H1 (cell line): ENCODE measurements at regions of chr5 and their contacts with region 1.

Region 1: DNA sequence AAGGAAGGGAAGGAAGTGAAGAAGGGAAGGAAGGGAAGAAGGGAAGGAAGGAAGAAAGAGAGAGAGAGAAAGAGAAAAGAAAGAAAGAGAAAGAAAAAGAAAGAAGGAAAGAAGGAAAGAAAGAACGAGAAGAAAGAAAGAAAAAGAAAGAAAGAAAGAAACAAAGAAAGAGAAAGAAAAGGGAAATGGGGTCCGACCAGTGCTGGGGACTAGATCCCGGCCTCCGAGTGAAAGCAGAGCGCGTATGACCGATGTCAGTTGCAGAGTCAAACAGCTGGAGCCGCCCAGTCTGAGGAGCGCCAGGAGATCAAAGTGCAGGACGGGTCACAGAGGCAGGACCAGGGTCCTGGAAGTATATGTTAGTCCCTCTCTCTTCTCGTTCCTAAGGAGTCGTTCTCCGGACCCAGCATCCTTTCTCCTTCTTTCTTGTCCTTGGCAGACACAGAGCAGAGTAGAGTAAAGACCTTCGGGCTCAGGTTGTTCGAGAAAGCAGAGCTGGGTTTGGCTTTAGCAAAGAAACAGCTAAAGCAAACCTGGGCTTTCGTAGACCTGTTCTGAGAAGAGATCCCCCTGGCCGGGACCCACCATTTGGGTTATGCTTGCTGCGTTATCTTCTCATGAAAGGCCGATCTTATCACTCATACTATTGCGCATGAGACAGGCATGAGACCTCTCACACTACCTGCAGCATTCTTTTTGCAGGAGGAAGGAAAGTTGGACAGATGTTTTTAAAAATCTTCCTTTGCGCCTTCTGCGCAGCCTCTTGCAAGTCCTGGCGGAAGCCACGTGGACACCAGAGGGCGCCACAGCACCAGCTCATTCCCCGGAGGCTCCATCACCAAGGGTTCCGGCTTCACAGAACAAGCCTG is 305.2 kb upstream of the MSX2 start:
- DNase-seq: peak; percentile 93 to 95
- H3K4me3 ChIP-seq: peak overlapping the region; percentile 18 to 57 (median 47); a peak in 7 of 8 replicates
- H3K27ac ChIP-seq: no peak overlapping the region
- H3K4me1 ChIP-seq: no peaks in the 10 kb centered on the region
- H3K27me3 ChIP-seq: peaks cover 0 to 11% (median 5%) of the 10 kb centered on the region in 4 experiments; a peak in 3 of 7 replicates
- CTCF ChIP-seq: peak; percentile 86 to 93 (median 91)
- EP300 ChIP-seq: no peak
- POLR2A ChIP-seq: no peak
- RAD21 ChIP-seq: peak; percentile 99

Region 2: GRCh38 chr5:174327317-174328236 is 91.6 kb before region 1 on chr5:
- CTCF ChIA-PET with region 1: interaction called, 16 read pairs
- POLR2A ChIA-PET with region 1: no interaction called
- DNase-seq: peak; percentile 76 to 88
- H3K4me3 ChIP-seq: no peak overlapping the region
- H3K27ac ChIP-seq: no peak overlapping the region
- H3K4me1 ChIP-seq: peaks cover 3 to 17% (median 8%) of the 10 kb centered on the region in 4 experiments
- H3K27me3 ChIP-seq: peaks cover 0 to 4% (median 0%) of the 10 kb centered on the region in 4 experiments; a peak in 3 of 7 replicates
- CTCF ChIP-seq: peak; percentile 77 to 97 (median 89)
- EP300 ChIP-seq: no peak
- POLR2A ChIP-seq: no peak
- RAD21 ChIP-seq: peak; percentile 82 to 93

Region 3: GRCh38 chr5:174430940-174431339 is 11.8 kb after region 1 on chr5:
- CTCF ChIA-PET with region 1: interaction called, 14 read pairs
- POLR2A ChIA-PET with region 1: no interaction called
- DNase-seq: no peak
- H3K4me3 ChIP-seq: no peak overlapping the region
- H3K27ac ChIP-seq: no peak overlapping the region
- H3K4me1 ChIP-seq: no peaks in the 10 kb centered on the region
- H3K27me3 ChIP-seq: no peaks in the 10 kb centered on the region; a peak in 1 of 7 replicates
- CTCF ChIP-seq: no peak
- EP300 ChIP-seq: no peak
- POLR2A ChIP-seq: no peak
- RAD21 ChIP-seq: no peak

Region 4: DNA sequence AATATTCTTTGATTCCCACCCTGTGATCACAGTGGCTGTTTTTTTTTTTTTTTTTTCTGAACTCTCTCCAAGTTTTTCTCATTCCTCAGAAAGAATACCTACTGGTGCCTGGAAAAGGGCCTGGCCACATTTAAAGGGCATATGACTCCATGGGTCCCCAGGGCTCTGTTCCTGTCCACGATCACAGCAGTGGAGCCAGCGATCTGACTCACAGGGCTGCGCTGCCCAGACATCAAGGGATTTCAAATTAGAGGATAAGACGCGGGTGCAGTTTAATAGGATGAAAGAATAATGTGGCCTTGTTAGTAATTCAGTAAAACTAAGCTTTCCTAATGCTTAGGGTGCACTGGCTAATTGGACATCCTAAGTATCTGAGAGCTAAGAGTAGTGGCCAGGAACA is 130.1 kb after region 1 on chr5:
- CTCF ChIA-PET with region 1: interaction called, 11 read pairs
- POLR2A ChIA-PET with region 1: no interaction called
- DNase-seq: no peak
- H3K4me3 ChIP-seq: no peak overlapping the region
- H3K27ac ChIP-seq: no peak overlapping the region
- H3K4me1 ChIP-seq: no peaks in the 10 kb centered on the region
- H3K27me3 ChIP-seq: no peaks in the 10 kb centered on the region
- CTCF ChIP-seq: no peak
- EP300 ChIP-seq: no peak
- POLR2A ChIP-seq: no peak
- RAD21 ChIP-seq: no peak

Region 5: GRCh38 chr5:174720612-174721451 is 301.7 kb after region 1 on chr5:
- CTCF ChIA-PET with region 1: interaction called, 21 read pairs
- POLR2A ChIA-PET with region 1: no interaction called
- DNase-seq: peak in 1 of 2 experiments; percentile 77
- H3K4me3 ChIP-seq: peak overlapping the region; percentile 28 to 55 (median 32); a peak in 7 of 8 replicates
- H3K27ac ChIP-seq: no peak overlapping the region
- H3K4me1 ChIP-seq: peaks cover 13 to 25% (median 19%) of the 10 kb centered on the region in 4 experiments
- H3K27me3 ChIP-seq: peaks cover 52 to 82% (median 78%) of the 10 kb centered on the region in 4 experiments
- CTCF ChIP-seq: no peak
- EP300 ChIP-seq: no peak
- POLR2A ChIP-seq: no peak
- RAD21 ChIP-seq: no peak

Region 6: DNA sequence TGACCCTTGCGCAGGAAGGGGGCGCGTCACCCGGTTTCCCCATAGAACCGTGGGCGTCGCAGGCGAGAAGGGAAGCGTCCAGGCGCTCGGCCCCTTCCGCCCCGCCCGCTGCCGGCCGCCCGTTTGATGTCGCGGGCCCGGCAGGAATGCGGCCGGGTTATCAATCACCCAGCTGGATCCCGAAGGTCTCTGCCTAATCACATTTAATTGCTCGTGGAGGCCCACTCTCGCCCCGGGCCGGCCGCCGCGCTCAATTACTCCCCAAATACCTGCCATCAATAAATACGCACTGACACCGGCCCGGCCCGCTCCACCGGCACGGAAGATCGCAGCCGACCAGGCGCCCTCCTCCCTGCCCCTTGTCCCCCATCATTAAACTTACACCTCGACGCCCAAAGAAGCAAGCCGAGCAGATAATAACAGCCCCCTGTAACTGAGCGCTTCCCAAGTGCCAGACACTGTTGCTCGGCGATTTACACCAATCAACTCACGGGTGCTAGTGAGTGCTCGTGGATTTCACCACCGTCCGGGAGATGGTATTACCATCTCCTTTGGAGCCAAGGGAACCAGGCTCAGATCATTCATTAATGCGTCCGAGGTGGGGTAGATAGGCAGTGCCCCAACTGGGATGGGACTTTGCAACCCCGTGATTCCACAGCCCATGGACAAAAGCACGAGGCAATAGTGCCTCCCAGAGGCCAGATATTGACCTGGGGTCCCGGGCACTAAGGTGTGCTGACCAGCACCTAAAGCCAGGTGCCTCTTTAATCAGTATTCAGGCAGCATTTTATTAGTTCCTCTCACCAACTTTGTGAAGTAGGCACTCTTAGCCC is 316.6 kb after region 1 on chr5:
- CTCF ChIA-PET with region 1: interaction called, 37 read pairs
- POLR2A ChIA-PET with region 1: no interaction called
- DNase-seq: peak in 1 of 2 experiments; percentile 73
- H3K4me3 ChIP-seq: peak overlapping the region; percentile 38 to 67 (median 44)
- H3K27ac ChIP-seq: no peak overlapping the region
- H3K4me1 ChIP-seq: peaks cover 0 to 41% (median 17%) of the 10 kb centered on the region in 4 experiments; a peak in 6 of 7 replicates
- H3K27me3 ChIP-seq: peaks cover 51 to 74% (median 72%) of the 10 kb centered on the region in 4 experiments
- CTCF ChIP-seq: peak; percentile 74 to 82 (median 78)
- EP300 ChIP-seq: no peak
- POLR2A ChIP-seq: no peak
- RAD21 ChIP-seq: peak; percentile 94

Region 7: GRCh38 chr5:174793684-174794328 is 374.6 kb after region 1 on chr5:
- CTCF ChIA-PET with region 1: interaction called, 28 read pairs
- POLR2A ChIA-PET with region 1: no interaction called
- DNase-seq: peak; percentile 23 to 92
- H3K4me3 ChIP-seq: peak overlapping the region in 1 of 4 experiments; percentile 33; a peak in 1 of 8 replicates
- H3K27ac ChIP-seq: no peak overlapping the region
- H3K4me1 ChIP-seq: peaks cover 0 to 3% (median 0%) of the 10 kb centered on the region in 4 experiments; a peak in 1 of 7 replicates
- H3K27me3 ChIP-seq: peaks cover 0 to 5% (median 5%) of the 10 kb centered on the region in 4 experiments; a peak in 5 of 7 replicates
- CTCF ChIP-seq: peak; percentile 77 to 85 (median 83)
- EP300 ChIP-seq: no peak
- POLR2A ChIP-seq: no peak
- RAD21 ChIP-seq: peak; percentile 87 to 91